ENCODE measurements at regions of chr9 and their contacts with region 1.

Region 1: GRCh38 chr9:91949946-91950664 is at the start of gene ROR2:
- DNase-seq: no peak
- H3K4me3 ChIP-seq: peak within 1 kb of the TSS; percentile 49
- H3K27me3 ChIP-seq: peaks cover 17% of the 10 kb centered on the region
- CTCF ChIP-seq: no peak; the same call in 1 of the 2 replicates
- polyA plus RNA-seq, gene ROR2: 0.59 and 1.1 TPM in 2 replicates

Region 2: GRCh38 chr9:91515074-91515687 is 434.9 kb before region 1 on chr9:
- CTCF ChIA-PET with region 1: no interaction called
- POLR2A ChIA-PET with region 1: no interaction called
- DNase-seq: peak; percentile 63
- H3K4me3 ChIP-seq: peak overlapping the region; percentile 23
- H3K27me3 ChIP-seq: no peaks in the 10 kb centered on the region
- CTCF ChIP-seq: no peak

Region 3: GRCh38 chr9:91734371-91734981 is 215.6 kb before region 1 on chr9:
- CTCF ChIA-PET with region 1: interaction called, 10 read pairs
- POLR2A ChIA-PET with region 1: no interaction called
- DNase-seq: no peak
- H3K4me3 ChIP-seq: no peak overlapping the region
- H3K27me3 ChIP-seq: peaks cover 3% of the 10 kb centered on the region; the same call in 1 of the 2 replicates
- CTCF ChIP-seq: peak; percentile 97

Region 4: GRCh38 chr9:91775011-91775707 is 174.9 kb before region 1 on chr9:
- CTCF ChIA-PET with region 1: interaction called, 13 read pairs
- POLR2A ChIA-PET with region 1: no interaction called
- DNase-seq: no peak
- H3K4me3 ChIP-seq: no peak overlapping the region
- H3K27me3 ChIP-seq: peaks cover 5% of the 10 kb centered on the region; the same call in 1 of the 2 replicates
- CTCF ChIP-seq: peak; percentile 79

Region 5: GRCh38 chr9:91803151-91803940 is 146.8 kb before region 1 on chr9:
- CTCF ChIA-PET with region 1: no interaction called
- POLR2A ChIA-PET with region 1: no interaction called
- DNase-seq: peak; percentile 41
- H3K4me3 ChIP-seq: no peak overlapping the region
- H3K27me3 ChIP-seq: no peaks in the 10 kb centered on the region
- CTCF ChIP-seq: no peak

Region 6: GRCh38 chr9:91963711-91964240 is 13.7 kb after region 1 on chr9:
- CTCF ChIA-PET with region 1: interaction called, 17 read pairs
- POLR2A ChIA-PET with region 1: no interaction called
- DNase-seq: no peak
- H3K4me3 ChIP-seq: no peak overlapping the region
- H3K27me3 ChIP-seq: no peaks in the 10 kb centered on the region
- CTCF ChIP-seq: no peak

Region 7: GRCh38 chr9:91992461-91993041 is 42.4 kb after region 1 on chr9:
- CTCF ChIA-PET with region 1: interaction called, 21 read pairs
- POLR2A ChIA-PET with region 1: interaction called, 3 read pairs
- DNase-seq: peak; percentile 97
- H3K4me3 ChIP-seq: peak overlapping the region; percentile 31; the same call in 1 of the 2 replicates
- H3K27me3 ChIP-seq: no peaks in the 10 kb centered on the region
- CTCF ChIP-seq: no peak